CD8-positive, alpha-beta memory T cell (primary cell): ENCODE measurements at regions of chr11 and their contacts with region 1.

Region 1: GRCh38 chr11:107996006-107996776 is 12.5 kb upstream of the CUL5 start:
- DNase-seq: no peak
- H3K4me3 ChIP-seq: no peak overlapping the region
- H3K4me3 Mint-ChIP-seq: no peak overlapping the region
- H3K27ac ChIP-seq: no peak overlapping the region
- H3K27ac Mint-ChIP-seq: peak overlapping the region in 1 of 8 donors; percentile 57
- H3K4me1 ChIP-seq: no peaks in the 10 kb centered on the region
- H3K4me1 Mint-ChIP-seq: peaks cover 0 to 2% (median 0%) of the 10 kb centered on the region in 3 donors
- H3K27me3 ChIP-seq: no peaks in the 10 kb centered on the region
- H3K27me3 Mint-ChIP-seq: peaks cover 17 to 40% of the 10 kb centered on the region in 2 donors

Region 2: GRCh38 chr11:108008656-108009496 is 12.7 kb after region 1 on chr11 and contains the start of gene CUL5:
- CTCF ChIA-PET with region 1: interaction called, 12 read pairs
- POLR2A ChIA-PET with region 1: interaction called, 3 read pairs
- DNase-seq: peak; percentile 85 to 91 (median 88)
- H3K4me3 ChIP-seq: peak within 1 kb of the TSS; percentile 94
- H3K4me3 Mint-ChIP-seq: peak within 1 kb of the TSS; percentile 93 to 100 (median 98)
- H3K27ac ChIP-seq: peak within 1 kb of the TSS; percentile 97
- H3K27ac Mint-ChIP-seq: peak within 1 kb of the TSS; percentile 93 to 99 (median 98)
- H3K4me1 ChIP-seq: peaks cover 32% of the 10 kb centered on the region
- H3K4me1 Mint-ChIP-seq: peaks cover 4 to 20% (median 8%) of the 10 kb centered on the region in 3 donors
- H3K27me3 ChIP-seq: no peaks in the 10 kb centered on the region
- H3K27me3 Mint-ChIP-seq: no peaks in the 10 kb centered on the region
- total RNA-seq, gene CUL5: 41.8 to 42.9 TPM

Region 3: GRCh38 chr11:108025387-108026080 is 29.3 kb after region 1 on chr11:
- CTCF ChIA-PET with region 1: no interaction called
- POLR2A ChIA-PET with region 1: no interaction called
- DNase-seq: no peak
- H3K4me3 ChIP-seq: no peak overlapping the region
- H3K4me3 Mint-ChIP-seq: peak overlapping the region in 2 of 7 donors; percentile 40 to 48
- H3K27ac ChIP-seq: no peak overlapping the region
- H3K27ac Mint-ChIP-seq: peak overlapping the region in 5 of 8 donors; percentile 8 to 80 (median 26)
- H3K4me1 ChIP-seq: peaks cover 26% of the 10 kb centered on the region
- H3K4me1 Mint-ChIP-seq: peaks cover 61 to 81% (median 77%) of the 10 kb centered on the region in 3 donors
- H3K27me3 ChIP-seq: no peaks in the 10 kb centered on the region
- H3K27me3 Mint-ChIP-seq: no peaks in the 10 kb centered on the region